Naive thymus-derived CD4-positive, alpha-beta T cell (primary cell): ENCODE measurements at regions of chr9 and their contacts with region 1.

Region 1: DNA sequence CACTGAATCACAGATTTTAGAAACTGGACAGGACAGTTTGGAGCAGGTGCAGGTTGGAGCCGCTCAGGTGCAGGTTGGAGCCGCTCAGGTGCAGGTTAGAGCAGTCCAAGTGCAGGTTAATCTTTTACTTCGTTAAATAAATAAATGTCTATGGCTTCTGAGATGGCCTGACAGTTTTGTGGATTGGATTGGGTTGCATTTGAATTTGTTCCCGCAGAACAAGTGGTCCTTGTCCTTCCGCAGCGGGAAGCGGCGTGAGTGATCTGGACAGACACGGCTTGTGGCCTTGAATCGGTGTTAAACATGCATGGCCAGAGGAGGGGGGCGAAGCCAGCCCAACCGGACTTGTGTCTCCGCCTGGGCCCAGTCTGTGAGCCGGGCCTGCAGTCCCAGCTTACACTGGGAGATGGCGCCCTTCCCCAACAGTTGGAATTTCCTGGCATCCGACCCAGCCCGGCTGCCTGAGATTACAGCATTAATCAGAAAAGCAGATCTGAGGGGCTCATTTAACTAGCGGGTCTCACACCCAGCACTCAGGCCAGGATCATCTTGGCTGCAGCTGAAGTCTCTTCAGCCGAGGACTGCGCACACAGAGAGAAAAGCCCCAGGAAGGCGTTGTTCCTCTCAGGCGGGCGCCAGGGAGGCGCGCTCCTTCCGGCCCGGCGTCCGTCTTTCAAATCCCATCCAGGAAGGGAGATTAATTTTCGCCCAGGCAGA is 1.5 kb upstream of the OLFM1 start:
- DNase-seq: peak in 1 of 9 donors; percentile 54
- ATAC-seq: no peak
- H3K4me3 ChIP-seq: no peak overlapping the region
- H3K4me3 Mint-ChIP-seq: peak overlapping the region in 6 of 10 donors; percentile 17 to 73 (median 42)
- H3K27ac ChIP-seq: no peak overlapping the region
- H3K27ac Mint-ChIP-seq: peak overlapping the region in 1 of 9 donors; percentile 50
- H3K4me1 ChIP-seq: no peaks in the 10 kb centered on the region
- H3K4me1 Mint-ChIP-seq: peaks cover 0 to 10% (median 6%) of the 10 kb centered on the region in 7 donors
- H3K27me3 ChIP-seq: no peaks in the 10 kb centered on the region
- H3K27me3 Mint-ChIP-seq: peaks cover 30 to 63% (median 40%) of the 10 kb centered on the region in 5 donors

Region 2: GRCh38 chr9:135268981-135269380 is 183.0 kb after region 1 on chr9:
- CTCF ChIA-PET with region 1: no interaction called
- POLR2A ChIA-PET with region 1: no interaction called
- intact Hi-C with region 1: loop called in 1 of 2 experiments (anchors 5 kb)
- DNase-seq: no peak
- ATAC-seq: no peak
- H3K4me3 ChIP-seq: no peak overlapping the region
- H3K4me3 Mint-ChIP-seq: no peak overlapping the region
- H3K27ac ChIP-seq: no peak overlapping the region
- H3K27ac Mint-ChIP-seq: no peak overlapping the region
- H3K4me1 ChIP-seq: no peaks in the 10 kb centered on the region
- H3K4me1 Mint-ChIP-seq: no peaks in the 10 kb centered on the region
- H3K27me3 ChIP-seq: no peaks in the 10 kb centered on the region
- H3K27me3 Mint-ChIP-seq: peaks cover 0 to 61% (median 14%) of the 10 kb centered on the region in 5 donors

Region 3: DNA sequence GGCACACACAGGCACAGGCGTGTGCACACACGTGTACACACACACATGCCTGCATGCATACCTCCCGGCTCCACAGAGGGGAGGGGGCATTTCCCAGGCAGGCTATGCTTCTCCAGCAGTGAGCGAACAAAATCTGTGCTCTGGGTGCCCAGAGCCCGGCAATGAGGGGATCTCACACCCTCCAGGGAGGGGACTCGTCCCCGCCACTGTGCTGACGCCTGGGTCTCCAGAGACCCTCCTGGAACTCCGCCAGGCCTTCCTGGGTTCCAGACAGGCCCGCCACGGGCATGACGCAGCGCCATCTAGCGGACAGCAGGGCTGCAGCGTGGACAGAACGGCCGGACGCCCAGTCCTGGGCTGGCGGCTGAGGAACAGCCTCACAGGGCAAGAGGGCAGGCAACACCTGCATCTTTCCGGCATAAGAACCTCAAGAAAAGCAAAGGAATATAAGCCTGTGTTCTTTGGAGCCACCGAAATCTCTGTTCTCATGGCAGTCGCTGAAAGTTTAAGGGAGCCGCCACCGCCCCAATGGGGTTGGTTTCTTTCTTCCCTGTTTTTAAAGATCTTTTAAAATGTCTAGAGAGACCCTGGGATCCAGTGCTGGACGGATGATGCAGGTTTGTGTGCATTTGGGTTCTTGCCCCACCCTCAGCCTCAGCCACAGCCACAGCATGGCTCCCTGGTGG is 258.0 kb after region 1 on chr9:
- CTCF ChIA-PET with region 1: no interaction called
- POLR2A ChIA-PET with region 1: no interaction called
- intact Hi-C with region 1: loop called in 1 of 2 experiments (anchors 5 kb)
- DNase-seq: peak in 5 of 9 donors; percentile 10 to 63 (median 21)
- ATAC-seq: peak; percentile 54
- H3K4me3 ChIP-seq: no peak overlapping the region
- H3K4me3 Mint-ChIP-seq: no peak overlapping the region
- H3K27ac ChIP-seq: no peak overlapping the region
- H3K27ac Mint-ChIP-seq: no peak overlapping the region
- H3K4me1 ChIP-seq: no peaks in the 10 kb centered on the region
- H3K4me1 Mint-ChIP-seq: peaks cover 0 to 1% (median 0%) of the 10 kb centered on the region in 7 donors
- H3K27me3 ChIP-seq: no peaks in the 10 kb centered on the region
- H3K27me3 Mint-ChIP-seq: peaks cover 0 to 34% (median 8%) of the 10 kb centered on the region in 5 donors

Region 4: GRCh38 chr9:135410831-135411473 is 325.0 kb after region 1 on chr9:
- CTCF ChIA-PET with region 1: no interaction called
- POLR2A ChIA-PET with region 1: no interaction called
- intact Hi-C with region 1: loop called in 1 of 2 experiments (anchors 1 kb)
- DNase-seq: no peak
- ATAC-seq: no peak
- H3K4me3 ChIP-seq: no peak overlapping the region
- H3K4me3 Mint-ChIP-seq: no peak overlapping the region
- H3K27ac ChIP-seq: no peak overlapping the region
- H3K27ac Mint-ChIP-seq: no peak overlapping the region
- H3K4me1 ChIP-seq: no peaks in the 10 kb centered on the region
- H3K4me1 Mint-ChIP-seq: no peaks in the 10 kb centered on the region
- H3K27me3 ChIP-seq: no peaks in the 10 kb centered on the region
- H3K27me3 Mint-ChIP-seq: peaks cover 0 to 22% (median 3%) of the 10 kb centered on the region in 5 donors